ENCODE measurements at regions of chr1 and their contacts with region 1.

Region 1: GRCh38 chr1:40404670-40405462 is 31.3 kb downstream of the SMAP2 start:
- DNase-seq: peak; percentile 70 to 79 (median 75)
- H3K4me3 ChIP-seq: no peak overlapping the region
- H3K4me3 Mint-ChIP-seq: peak overlapping the region; percentile 12 to 84 (median 60)
- H3K27ac ChIP-seq: peak overlapping the region; percentile 60
- H3K27ac Mint-ChIP-seq: peak overlapping the region; percentile 67 to 98 (median 96)
- H3K4me1 ChIP-seq: peaks cover 61% of the 10 kb centered on the region
- H3K4me1 Mint-ChIP-seq: peaks cover 41 to 74% (median 64%) of the 10 kb centered on the region in 4 donors
- H3K27me3 ChIP-seq: no peaks in the 10 kb centered on the region
- H3K27me3 Mint-ChIP-seq: no peaks in the 10 kb centered on the region

Region 2: DNA sequence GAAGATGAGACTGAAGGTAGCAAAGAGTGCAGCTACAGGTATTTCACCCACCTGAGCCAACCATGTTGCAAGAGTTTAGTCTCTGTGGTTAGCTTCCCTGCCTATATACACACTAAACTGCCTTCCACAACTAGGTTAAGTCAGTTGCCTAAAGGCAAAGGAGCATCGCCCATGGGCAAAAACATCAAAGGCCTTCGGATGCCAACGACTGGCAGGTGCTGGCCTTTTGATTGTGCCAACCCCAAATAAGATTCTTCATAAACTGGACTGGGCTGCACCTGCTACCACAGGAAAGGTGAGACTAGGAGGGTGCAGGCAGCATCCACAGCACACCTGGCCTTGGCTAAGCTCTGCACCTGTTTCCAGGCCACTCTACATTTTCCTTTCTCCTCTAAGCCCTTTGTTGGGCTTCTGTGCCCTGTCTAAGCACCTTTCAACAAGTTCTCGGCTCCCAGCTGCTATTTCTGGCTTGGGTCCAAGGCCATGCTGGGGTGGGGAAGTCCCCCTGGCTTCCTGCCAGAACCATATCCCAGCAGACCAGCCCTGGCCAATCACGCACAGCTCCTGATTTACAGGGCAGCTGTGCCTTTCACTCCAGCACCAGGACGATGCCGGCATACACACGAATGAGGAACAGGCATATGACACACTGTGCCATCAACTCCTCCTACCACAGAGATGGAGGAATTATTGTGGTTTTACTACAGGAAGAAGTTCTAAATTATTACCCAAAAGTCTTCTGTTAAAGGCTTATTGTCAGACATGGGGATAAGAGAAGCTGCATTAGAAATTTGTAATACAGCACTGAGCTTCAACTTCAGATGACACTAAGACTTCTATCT is 559.4 kb before region 1 on chr1:
- CTCF ChIA-PET with region 1: no interaction called
- POLR2A ChIA-PET with region 1: no interaction called
- intact Hi-C with region 1: no loop called
- DNase-seq: peak; percentile 86 to 96 (median 90)
- H3K4me3 ChIP-seq: no peak overlapping the region
- H3K4me3 Mint-ChIP-seq: peak overlapping the region; percentile 55 to 88 (median 67)
- H3K27ac ChIP-seq: peak overlapping the region; percentile 68
- H3K27ac Mint-ChIP-seq: peak overlapping the region; percentile 92 to 97 (median 93)
- H3K4me1 ChIP-seq: peaks cover 56% of the 10 kb centered on the region
- H3K4me1 Mint-ChIP-seq: peaks cover 46 to 64% (median 52%) of the 10 kb centered on the region in 4 donors
- H3K27me3 ChIP-seq: no peaks in the 10 kb centered on the region
- H3K27me3 Mint-ChIP-seq: no peaks in the 10 kb centered on the region

Region 3: GRCh38 chr1:40143891-40144575 is 260.8 kb before region 1 on chr1:
- CTCF ChIA-PET with region 1: interaction called, 21 read pairs
- POLR2A ChIA-PET with region 1: no interaction called
- intact Hi-C with region 1: loop called (anchors 1 kb)
- DNase-seq: peak; percentile 60 to 65 (median 65)
- H3K4me3 ChIP-seq: no peak overlapping the region
- H3K4me3 Mint-ChIP-seq: no peak overlapping the region
- H3K27ac ChIP-seq: no peak overlapping the region
- H3K27ac Mint-ChIP-seq: peak overlapping the region in 1 of 7 donors; percentile 12
- H3K4me1 ChIP-seq: no peaks in the 10 kb centered on the region
- H3K4me1 Mint-ChIP-seq: peaks cover 0 to 7% (median 3%) of the 10 kb centered on the region in 4 donors
- H3K27me3 ChIP-seq: no peaks in the 10 kb centered on the region
- H3K27me3 Mint-ChIP-seq: peaks cover 13 to 30% of the 10 kb centered on the region in 2 donors

Region 4: DNA sequence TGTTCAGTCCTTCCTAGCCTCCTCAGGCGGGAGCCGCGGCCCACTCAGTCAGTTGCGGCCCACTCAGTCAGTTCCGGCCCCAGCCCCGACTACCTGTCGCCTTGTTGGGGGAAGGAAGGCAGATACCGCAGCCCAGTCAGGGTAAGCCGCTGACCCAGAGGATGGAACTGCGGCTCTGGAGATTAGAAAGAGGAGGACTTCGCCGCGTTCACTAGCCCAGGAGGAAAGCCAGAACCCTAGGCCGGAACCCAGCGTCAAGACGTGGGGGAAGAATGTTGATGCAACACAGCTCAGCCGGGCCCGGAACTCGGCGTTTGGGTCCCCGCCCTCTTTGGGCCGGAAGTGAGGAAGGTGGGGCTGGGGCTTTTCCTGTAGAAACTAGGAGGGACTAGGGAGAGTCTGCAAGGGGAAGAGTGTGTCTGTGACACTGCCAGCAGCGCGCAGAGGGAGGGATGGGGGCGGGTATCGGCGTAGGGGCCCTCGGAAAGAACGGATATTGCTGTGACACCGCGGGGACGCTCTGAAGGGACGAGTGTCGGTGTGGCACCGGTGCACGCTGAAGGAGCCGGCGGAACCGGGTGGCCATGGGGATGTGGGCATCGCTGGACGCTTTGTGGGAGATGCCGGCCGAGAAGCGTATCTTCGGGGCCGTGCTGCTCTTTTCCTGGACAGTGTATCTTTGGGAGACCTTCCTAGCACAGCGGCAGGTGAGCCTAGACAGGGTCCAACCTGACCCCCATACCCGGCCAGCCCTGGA is 147.0 kb before region 1 on chr1 and contains the start of gene ZMPSTE24:
- CTCF ChIA-PET with region 1: no interaction called
- POLR2A ChIA-PET with region 1: interaction called, 4 read pairs
- intact Hi-C with region 1: loop called (anchors 2 kb)
- DNase-seq: peak; percentile 95 to 99 (median 96)
- H3K4me3 ChIP-seq: peak within 1 kb of the TSS; percentile 86 to 99
- H3K4me3 Mint-ChIP-seq: peak within 1 kb of the TSS; percentile 92 to 99 (median 96)
- H3K27ac ChIP-seq: peak within 1 kb of the TSS; percentile 98
- H3K27ac Mint-ChIP-seq: peak within 1 kb of the TSS; percentile 98 to 100 (median 99)
- H3K4me1 ChIP-seq: peaks cover 37% of the 10 kb centered on the region
- H3K4me1 Mint-ChIP-seq: peaks cover 25 to 58% (median 38%) of the 10 kb centered on the region in 4 donors
- H3K27me3 ChIP-seq: no peaks in the 10 kb centered on the region
- H3K27me3 Mint-ChIP-seq: no peaks in the 10 kb centered on the region
- total RNA-seq, gene ZMPSTE24: 19.7 to 21.0 TPM

Region 5: DNA sequence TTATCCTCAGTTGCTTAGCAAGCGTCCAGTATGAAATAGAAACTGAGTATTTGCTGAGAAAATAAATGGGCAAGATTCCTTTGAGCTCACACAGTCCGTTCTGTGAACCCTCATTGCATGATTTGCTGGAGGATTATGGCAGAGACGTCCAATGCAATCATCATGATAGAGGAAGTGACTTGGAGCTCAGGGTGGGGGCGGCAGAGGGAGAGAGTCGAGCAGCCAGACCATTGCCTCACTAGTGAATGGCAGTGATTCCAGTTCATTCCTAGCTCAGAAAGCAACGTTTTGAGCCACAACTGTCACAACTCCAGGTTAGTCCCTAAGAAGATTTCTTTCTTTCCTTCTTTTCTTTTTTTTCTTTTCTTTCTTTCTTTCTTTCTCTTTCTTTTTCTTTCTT is 60.3 kb before region 1 on chr1:
- CTCF ChIA-PET with region 1: interaction called, 87 read pairs
- POLR2A ChIA-PET with region 1: interaction called, 19 read pairs
- intact Hi-C with region 1: loop called (anchors 1 kb)
- DNase-seq: no peak
- H3K4me3 ChIP-seq: no peak overlapping the region
- H3K4me3 Mint-ChIP-seq: peak overlapping the region in 6 of 8 donors; percentile 22 to 53 (median 42)
- H3K27ac ChIP-seq: no peak overlapping the region
- H3K27ac Mint-ChIP-seq: peak overlapping the region in 5 of 7 donors; percentile 5 to 67 (median 9)
- H3K4me1 ChIP-seq: peaks cover 33% of the 10 kb centered on the region
- H3K4me1 Mint-ChIP-seq: peaks cover 24 to 52% (median 38%) of the 10 kb centered on the region in 4 donors
- H3K27me3 ChIP-seq: no peaks in the 10 kb centered on the region
- H3K27me3 Mint-ChIP-seq: no peaks in the 10 kb centered on the region

Region 6: GRCh38 chr1:40385437-40386358 is 19.2 kb before region 1 on chr1:
- CTCF ChIA-PET with region 1: interaction called, 52 read pairs
- POLR2A ChIA-PET with region 1: interaction called, 49 read pairs
- intact Hi-C with region 1: loop called (anchors 1 kb)
- DNase-seq: peak; percentile 90 to 95 (median 93)
- H3K4me3 ChIP-seq: peak overlapping the region; percentile 45 to 67
- H3K4me3 Mint-ChIP-seq: peak overlapping the region; percentile 78 to 94 (median 87)
- H3K27ac ChIP-seq: peak overlapping the region; percentile 99
- H3K27ac Mint-ChIP-seq: peak overlapping the region; percentile 95 to 100 (median 99)
- H3K4me1 ChIP-seq: peaks cover 97% of the 10 kb centered on the region
- H3K4me1 Mint-ChIP-seq: peaks cover 75 to 95% (median 85%) of the 10 kb centered on the region in 4 donors
- H3K27me3 ChIP-seq: no peaks in the 10 kb centered on the region
- H3K27me3 Mint-ChIP-seq: no peaks in the 10 kb centered on the region